Breast epithelium (tissue), 4 donors: ENCODE measurements at regions of chr9 and their contacts with region 1.

Region 1: GRCh38 chr9:28961623-28962022 is 1388.3 kb upstream of the C9orf72 start:
- DNase-seq: no peak
- H3K4me3 ChIP-seq: no peak overlapping the region
- H3K27ac ChIP-seq: no peak overlapping the region
- H3K4me1 ChIP-seq: no peaks in the 10 kb centered on the region
- H3K27me3 ChIP-seq: no peaks in the 10 kb centered on the region
- CTCF ChIP-seq: no peak
- POLR2A ChIP-seq: no peak

Region 2: DNA sequence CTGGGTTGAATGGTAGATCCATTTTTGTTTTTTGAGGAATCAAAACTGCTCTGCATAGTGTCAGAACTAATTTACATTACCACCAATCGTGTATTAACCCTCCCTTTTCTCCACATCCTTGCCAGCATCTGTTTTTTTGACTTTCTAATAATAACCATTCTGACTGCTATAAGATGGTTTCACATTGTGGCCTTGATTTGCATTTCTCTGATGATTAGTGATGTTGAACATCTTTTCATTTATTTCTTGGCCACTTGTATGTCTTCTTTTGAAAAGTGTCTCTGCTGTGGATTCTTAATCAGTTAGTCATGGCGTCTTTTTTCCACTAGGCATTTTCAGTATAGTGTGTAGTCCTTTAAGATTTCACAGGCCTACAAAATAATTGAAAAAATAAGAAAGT is 756.0 kb after region 1 on chr9:
- intact Hi-C with region 1: loop called (anchors 5 kb)
- DNase-seq: no peak
- H3K4me3 ChIP-seq: no peak overlapping the region
- H3K27ac ChIP-seq: no peak overlapping the region
- H3K4me1 ChIP-seq: no peaks in the 10 kb centered on the region
- H3K27me3 ChIP-seq: no peaks in the 10 kb centered on the region
- CTCF ChIP-seq: no peak
- POLR2A ChIP-seq: no peak